ENCODE measurements at regions of chr7 and their contacts with region 1.

Region 1: DNA sequence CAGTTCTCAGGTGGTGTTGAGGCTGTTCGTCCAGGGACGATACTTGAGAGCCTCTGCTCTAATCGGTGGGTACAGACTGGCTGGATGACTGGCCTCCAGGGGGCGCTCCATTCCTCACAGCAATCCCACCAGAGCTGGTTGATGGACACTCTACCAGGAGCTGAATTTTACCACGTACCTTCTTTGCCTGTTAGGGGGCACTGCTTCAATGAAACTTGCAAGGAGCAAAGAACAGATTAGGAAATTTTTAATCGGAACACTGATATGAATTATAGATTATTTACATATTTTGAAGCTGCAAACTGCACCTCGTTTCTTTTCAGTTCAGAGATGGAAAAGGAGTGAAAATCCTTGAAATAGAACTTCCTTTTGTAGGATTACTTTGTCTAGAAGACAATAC is 44.9 kb downstream of the KBTBD2 start:
- DNase-seq: peak; percentile 75
- H3K4me3 ChIP-seq: no peak overlapping the region
- H3K27ac ChIP-seq: no peak overlapping the region
- H3K4me1 ChIP-seq: no peaks in the 10 kb centered on the region
- H3K27me3 ChIP-seq: no peaks in the 10 kb centered on the region
- CTCF ChIP-seq: peak; percentile 66 to 76 (median 71)
- POLR2A ChIP-seq: no peak

Region 2: DNA sequence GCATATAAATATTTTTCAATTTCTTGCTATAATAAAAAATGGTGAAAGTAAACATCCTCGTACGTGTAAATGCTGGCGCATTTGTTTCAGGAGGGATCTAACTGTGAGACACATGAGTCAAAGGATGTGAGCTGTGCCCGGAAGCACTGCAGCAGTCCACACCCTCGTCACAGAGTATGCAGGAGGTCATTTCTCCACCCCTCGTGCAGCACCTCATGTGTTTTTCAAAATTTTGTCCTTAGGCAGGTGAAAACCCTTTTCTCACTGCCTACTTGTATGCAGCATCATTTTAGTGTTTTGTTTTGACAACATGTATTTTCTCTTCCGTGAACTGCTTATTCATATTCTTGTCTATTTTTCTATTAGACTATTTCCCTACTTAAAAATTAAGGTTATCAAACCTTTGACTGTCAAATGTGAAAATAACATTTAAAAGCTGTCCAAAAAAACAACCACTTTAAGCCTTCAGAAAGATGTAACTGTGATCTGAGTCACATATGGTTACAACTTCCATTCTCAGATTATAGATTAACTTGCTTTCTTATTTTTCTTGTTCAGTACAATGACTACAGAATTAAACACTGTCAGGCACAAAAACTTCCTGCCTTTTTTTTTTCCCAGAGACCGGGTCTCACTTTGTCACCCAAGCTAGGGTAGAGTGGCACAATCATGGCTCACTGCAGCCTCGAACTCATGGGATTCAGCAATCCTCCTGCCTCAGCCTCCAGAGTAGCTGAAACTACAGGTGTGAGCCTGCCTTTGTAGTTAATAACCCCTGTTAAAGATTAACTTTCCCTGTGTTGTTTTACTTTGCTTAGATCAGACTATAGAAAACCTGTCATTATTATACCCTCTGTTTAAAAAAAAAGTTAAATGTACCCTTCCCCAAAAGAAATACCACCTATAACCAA is 188.4 kb before region 1 on chr7:
- intact Hi-C with region 1: no loop called
- DNase-seq: no peak
- H3K4me3 ChIP-seq: no peak overlapping the region
- H3K27ac ChIP-seq: no peak overlapping the region
- H3K4me1 ChIP-seq: no peaks in the 10 kb centered on the region
- H3K27me3 ChIP-seq: no peaks in the 10 kb centered on the region
- CTCF ChIP-seq: no peak
- POLR2A ChIP-seq: no peak

Region 3: DNA sequence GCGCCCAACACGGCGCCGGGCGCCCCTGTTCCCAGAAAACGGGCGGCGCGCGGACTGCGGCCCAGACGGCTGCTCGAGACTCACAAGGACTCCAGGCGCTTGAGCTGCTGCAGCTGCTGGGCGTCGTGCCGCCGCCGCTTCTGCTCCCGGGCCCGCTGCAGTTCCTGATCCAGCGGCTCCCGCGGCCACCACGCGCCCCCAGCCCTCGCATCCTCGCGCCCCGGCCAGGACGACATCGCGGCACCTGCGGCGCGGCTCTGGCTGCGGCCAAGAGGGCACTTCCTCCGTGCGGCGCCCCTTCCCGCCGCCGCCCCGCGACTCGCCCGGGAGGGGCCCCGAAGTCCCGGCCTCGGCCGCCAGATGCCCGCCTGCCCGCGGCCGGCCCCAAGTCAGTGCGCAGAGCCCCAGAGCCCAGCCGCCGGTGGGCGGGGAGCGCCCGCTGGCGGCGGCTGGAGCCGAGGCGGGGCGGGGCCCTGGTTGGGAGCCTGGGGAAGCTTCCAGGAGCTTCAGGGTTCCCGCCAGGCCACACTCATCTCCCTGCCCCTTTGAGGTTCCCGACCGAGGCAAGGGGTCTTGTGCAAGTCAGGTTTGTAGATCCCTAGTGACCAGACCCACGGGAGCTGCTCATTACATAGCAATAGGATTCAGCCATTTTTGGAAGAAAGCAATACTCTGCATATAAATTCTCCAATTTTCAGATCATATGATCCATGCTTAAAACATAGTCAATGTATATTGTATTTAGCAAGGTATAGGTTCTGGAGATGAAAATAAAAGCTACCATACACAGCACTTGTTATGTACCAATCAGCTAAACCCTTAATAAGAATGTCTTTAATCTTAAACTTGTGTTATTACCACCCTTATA is 96.3 kb after region 1 on chr7:
- intact Hi-C with region 1: loop called (anchors 5 kb)
- DNase-seq: peak; percentile 67
- H3K4me3 ChIP-seq: peak overlapping the region; percentile 72 to 82
- H3K27ac ChIP-seq: peak overlapping the region; percentile 86 to 95
- H3K4me1 ChIP-seq: no peaks in the 10 kb centered on the region
- H3K27me3 ChIP-seq: no peaks in the 10 kb centered on the region
- CTCF ChIP-seq: peak; percentile 58 to 76 (median 64)
- POLR2A ChIP-seq: peak; percentile 47

Region 4: DNA sequence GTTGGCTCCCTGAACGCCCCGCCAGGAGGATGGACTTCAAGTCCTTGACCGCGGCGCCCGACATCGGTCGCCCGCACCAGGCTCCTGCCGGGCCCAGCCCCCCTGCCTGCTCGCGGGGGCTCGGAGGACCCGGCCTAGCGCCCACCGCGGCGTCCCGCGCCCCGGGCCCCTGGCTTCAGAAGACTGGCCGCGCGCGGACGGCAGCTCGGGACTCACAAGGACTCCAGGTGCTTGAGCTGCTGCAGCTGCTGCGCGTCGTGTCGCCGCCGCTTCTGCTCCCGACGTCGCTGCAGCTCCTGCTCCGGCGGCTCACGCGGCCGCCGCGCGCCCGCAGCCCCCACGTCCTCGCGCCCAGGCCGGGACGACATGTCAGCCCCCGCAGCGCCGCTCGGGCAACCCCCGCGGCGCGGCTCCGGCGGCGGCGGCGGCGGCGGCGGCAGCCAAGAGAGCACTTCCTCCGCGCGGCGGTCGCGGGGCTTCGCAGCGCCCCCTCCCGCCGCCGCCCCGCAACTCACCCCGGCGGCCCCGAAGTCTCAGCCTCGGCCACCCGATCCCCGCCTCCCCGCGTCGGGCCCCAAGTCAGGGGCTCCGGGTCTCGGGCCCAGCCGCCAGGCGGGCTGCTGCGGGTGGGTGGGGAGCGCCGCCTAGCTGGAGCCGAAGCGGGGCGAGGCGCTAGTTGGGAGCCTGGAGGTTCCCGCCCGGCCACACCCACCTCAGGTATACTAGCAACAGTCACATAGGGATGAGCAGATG is 262.5 kb after region 1 on chr7 and contains the start of gene RP9:
- intact Hi-C with region 1: loop called (anchors 5 kb)
- DNase-seq: peak; percentile 44
- H3K4me3 ChIP-seq: peak within 1 kb of the TSS; percentile 97 to 99
- H3K27ac ChIP-seq: peak within 1 kb of the TSS; percentile 65 to 73
- H3K4me1 ChIP-seq: peaks cover 5% of the 10 kb centered on the region
- H3K27me3 ChIP-seq: no peaks in the 10 kb centered on the region
- CTCF ChIP-seq: peak; percentile 39 to 69 (median 50)
- POLR2A ChIP-seq: no peak
- total RNA-seq, gene RP9: 7.8 to 18.0 TPM

Region 5: DNA sequence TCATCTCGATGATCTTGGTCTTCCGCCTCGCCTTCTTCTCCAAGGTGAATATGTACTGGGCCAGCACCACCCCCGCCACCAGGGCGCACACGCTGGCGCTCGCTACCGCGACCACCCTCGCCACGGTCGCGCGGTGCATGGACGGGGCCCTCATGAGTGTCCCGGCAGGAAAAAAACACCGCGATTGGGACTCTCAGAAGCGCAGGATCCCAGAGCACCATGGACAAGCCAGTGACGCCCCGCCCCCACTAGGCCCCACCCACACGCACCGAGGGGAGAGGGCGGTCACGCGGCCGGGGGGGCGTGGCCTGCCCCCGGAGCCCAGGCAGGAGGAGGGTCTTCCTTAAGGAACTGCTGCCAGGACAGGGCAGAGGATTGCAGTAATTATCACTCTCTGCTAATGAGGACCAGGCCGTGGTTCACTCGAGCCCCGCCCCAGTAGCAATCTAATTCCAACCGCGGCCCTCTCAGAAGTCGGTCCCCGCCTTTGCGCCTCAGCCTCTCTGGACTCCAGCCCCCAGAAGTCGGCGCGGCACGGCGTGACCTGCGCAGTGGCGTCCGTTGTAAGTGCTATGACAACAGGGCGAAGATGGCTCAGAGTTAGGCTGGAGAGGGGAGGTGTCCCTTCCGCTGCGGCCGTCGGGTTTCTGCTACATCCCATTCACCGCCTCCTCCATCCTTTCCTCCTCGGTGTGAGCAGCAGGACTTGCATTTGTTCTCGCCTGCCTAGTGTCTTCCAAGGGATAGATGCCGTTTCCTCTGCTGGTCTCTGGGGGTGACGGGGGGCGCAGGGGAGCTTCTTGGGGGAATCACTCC is 282.5 kb after region 1 on chr7 and contains the start of gene BBS9:
- intact Hi-C with region 1: no loop called
- DNase-seq: peak; percentile 90
- H3K4me3 ChIP-seq: peak within 1 kb of the TSS; percentile 68 to 80
- H3K27ac ChIP-seq: peak within 1 kb of the TSS; percentile 89 to 92
- H3K4me1 ChIP-seq: no peaks in the 10 kb centered on the region
- H3K27me3 ChIP-seq: no peaks in the 10 kb centered on the region
- CTCF ChIP-seq: peak in 1 of 4 experiments; percentile 12
- POLR2A ChIP-seq: peak; percentile 24
- total RNA-seq, gene BBS9: 19.6 to 36.8 TPM

Measured in prostate gland (tissue), 2 donors.